Psoas muscle (tissue), 8 donors: ENCODE measurements at regions of chr3 and their contacts with region 1.

Region 1: DNA sequence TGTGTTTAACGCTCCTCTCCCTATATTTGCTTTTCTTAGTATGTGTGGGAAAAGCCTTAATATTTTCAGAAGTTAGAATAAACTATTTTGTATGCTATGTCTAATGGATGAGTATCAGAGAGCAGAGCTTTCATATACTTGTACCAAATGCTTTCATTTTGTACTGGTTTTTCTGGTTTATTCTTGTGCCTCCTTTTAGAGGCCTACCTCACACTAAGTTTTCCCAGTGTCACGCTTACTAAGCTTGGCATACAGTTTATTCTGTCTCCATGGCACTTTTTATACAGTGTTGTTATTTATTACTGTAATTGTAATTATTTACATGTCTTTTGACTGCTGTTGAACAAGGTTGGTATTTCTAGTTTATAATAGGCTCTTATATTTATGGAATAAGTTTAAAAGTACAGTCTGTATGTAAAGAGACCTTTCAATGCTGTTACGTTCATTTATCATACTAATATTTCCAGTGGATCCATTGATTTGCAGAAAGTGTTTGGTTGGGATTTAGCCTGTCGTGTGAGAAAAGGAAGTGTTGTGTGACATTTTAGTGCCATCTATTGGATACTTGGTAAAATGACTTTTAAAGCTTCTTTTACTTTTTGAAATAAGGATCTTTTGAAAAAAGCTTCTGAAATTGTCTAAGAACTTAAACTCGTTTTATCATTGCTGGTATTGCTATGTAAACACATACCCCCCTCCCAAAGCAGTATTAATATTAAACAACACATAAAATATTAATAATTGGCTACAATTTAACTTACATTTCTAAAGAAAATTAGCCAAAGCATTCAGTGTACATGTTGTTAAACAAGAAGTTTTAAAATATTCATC is 5.2 kb upstream of the EBLN2 start:
- DNase-seq: no peak
- ATAC-seq: peak in 3 of 4 donors; percentile 43 to 78 (median 62)
- H3K4me3 ChIP-seq: no peak overlapping the region
- H3K27ac ChIP-seq: no peak overlapping the region
- H3K4me1 ChIP-seq: peaks cover 6% of the 10 kb centered on the region
- H3K27me3 ChIP-seq: no peaks in the 10 kb centered on the region
- CTCF ChIP-seq: peak; percentile 52

Region 2: GRCh38 chr3:72847751-72848702 is 208.2 kb before region 1 on chr3 and contains the start of gene SHQ1:
- intact Hi-C with region 1: loop called (anchors 10 kb)
- DNase-seq: peak; percentile 96 to 98
- ATAC-seq: peak; percentile 98 to 99 (median 99)
- H3K4me3 ChIP-seq: peak within 1 kb of the TSS; percentile 89
- H3K27ac ChIP-seq: peak within 1 kb of the TSS; percentile 84
- H3K4me1 ChIP-seq: peaks cover 31% of the 10 kb centered on the region
- H3K27me3 ChIP-seq: no peaks in the 10 kb centered on the region
- CTCF ChIP-seq: no peak
- total RNA-seq, gene SHQ1: 6.2 to 20.6 (median 18.3) TPM

Region 3: DNA sequence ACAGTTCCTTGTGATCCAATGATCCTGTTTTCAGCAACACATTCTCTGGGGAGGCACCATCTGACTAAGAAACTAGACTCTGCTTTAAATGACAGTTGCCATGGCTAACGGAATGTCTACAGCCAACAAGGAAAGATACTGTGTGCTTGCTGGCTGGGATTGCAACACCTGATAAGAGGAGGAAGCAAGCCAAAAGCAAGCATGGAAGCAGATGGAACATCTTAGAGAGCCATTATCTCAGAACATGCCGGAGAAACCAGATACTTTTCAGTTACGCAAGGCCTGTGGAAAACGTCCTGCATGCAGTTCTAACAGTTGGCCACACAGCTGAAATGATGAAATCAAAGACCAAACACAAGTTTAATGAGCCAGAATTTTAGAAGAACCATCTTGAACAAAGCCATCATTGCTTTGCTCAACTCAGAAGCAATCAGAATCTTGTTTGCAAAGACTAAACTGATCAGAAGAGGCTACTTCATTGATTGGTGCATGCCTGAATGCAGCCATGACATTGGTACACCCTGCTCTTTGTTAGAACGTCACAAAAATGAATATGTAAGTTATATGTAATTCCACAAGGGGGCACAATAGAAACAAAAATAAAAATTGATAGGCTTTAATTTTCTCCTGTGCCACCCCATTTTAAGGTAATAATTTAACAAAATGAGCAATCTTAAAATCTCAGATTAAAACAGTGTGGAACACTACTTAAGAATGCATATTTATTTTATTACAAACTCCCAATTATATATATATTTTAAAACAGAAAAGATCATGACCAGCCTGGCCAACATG is 117.6 kb before region 1 on chr3:
- intact Hi-C with region 1: loop called (anchors 2 to 5 kb)
- DNase-seq: peak; percentile 37 to 57
- ATAC-seq: peak; percentile 88 to 98 (median 94)
- H3K4me3 ChIP-seq: no peak overlapping the region
- H3K27ac ChIP-seq: no peak overlapping the region
- H3K4me1 ChIP-seq: peaks cover 5% of the 10 kb centered on the region
- H3K27me3 ChIP-seq: no peaks in the 10 kb centered on the region
- CTCF ChIP-seq: peak; percentile 61